B cell (primary cell): ENCODE measurements at regions of chr4 and their contacts with region 1.

Region 1: DNA sequence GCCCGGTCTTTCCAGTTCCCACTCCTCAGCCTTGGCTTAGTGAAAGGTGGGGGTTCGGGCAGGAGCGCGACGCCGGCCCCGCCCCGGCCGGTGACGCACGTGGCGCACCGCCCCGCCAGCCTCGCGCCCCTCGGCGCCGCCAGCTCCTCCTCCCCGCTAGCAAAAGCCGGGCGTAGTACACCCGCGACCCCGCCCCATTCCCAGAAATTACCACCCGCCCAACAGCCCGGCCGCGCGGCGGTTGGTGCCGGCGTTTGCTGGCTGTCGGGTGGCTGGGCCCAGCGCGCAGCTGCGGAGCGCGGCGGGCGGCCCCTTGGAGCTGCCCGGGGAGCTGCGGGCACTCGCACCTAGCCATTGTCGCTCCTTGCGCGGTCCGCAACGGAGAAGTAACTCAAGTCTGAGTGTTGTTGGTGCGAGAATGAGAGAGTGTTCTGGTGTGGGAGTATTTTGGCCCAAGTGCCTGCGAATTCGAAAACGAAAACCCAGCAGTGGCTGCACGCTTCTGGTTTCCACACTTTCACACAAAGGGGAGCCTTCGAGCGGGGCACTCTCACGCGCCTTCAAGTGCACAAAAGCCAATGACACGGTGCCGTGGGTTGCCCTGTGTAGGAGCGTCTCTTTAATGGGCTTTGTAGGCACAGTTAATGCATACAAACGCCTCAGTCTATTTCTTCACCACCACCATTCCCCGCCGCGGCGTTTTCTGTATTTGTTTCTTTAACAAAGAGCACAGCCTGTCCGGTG is 1.0 kb upstream of the ELF2 start:
- DNase-seq: peak; percentile 94
- ATAC-seq: peak; percentile 75
- H3K4me3 ChIP-seq: peak overlapping the region; percentile 47 to 89 (median 79)
- H3K4me3 Mint-ChIP-seq: peak overlapping the region; percentile 95
- H3K27ac ChIP-seq: peak overlapping the region; percentile 87 to 95
- H3K27ac Mint-ChIP-seq: peak overlapping the region; percentile 94
- H3K4me1 ChIP-seq: peaks cover 12 to 15% of the 10 kb centered on the region in 2 donors
- H3K4me1 Mint-ChIP-seq: peaks cover 23% of the 10 kb centered on the region
- H3K27me3 ChIP-seq: no peaks in the 10 kb centered on the region
- H3K27me3 Mint-ChIP-seq: no peaks in the 10 kb centered on the region
- CTCF ChIP-seq: no peak

Region 2: GRCh38 chr4:139083956-139084803 is 93.9 kb before region 1 on chr4:
- CTCF ChIA-PET with region 1: interaction called, 5 read pairs
- POLR2A ChIA-PET with region 1: interaction called, 31 read pairs
- intact Hi-C with region 1: loop called (anchors 1 kb)
- DNase-seq: peak; percentile 92
- ATAC-seq: peak; percentile 62
- H3K4me3 ChIP-seq: peak overlapping the region; percentile 79 to 98 (median 97)
- H3K4me3 Mint-ChIP-seq: peak overlapping the region; percentile 87
- H3K27ac ChIP-seq: peak overlapping the region; percentile 89 to 93
- H3K27ac Mint-ChIP-seq: peak overlapping the region; percentile 94
- H3K4me1 ChIP-seq: peaks cover 14 to 23% of the 10 kb centered on the region in 2 donors
- H3K4me1 Mint-ChIP-seq: peaks cover 36% of the 10 kb centered on the region
- H3K27me3 ChIP-seq: no peaks in the 10 kb centered on the region
- H3K27me3 Mint-ChIP-seq: no peaks in the 10 kb centered on the region
- CTCF ChIP-seq: peak; percentile 42

Region 3: GRCh38 chr4:139142087-139142486 is 36.0 kb before region 1 on chr4:
- CTCF ChIA-PET with region 1: no interaction called
- POLR2A ChIA-PET with region 1: no interaction called
- intact Hi-C with region 1: no loop called
- DNase-seq: peak; percentile 52
- ATAC-seq: peak; percentile 76
- H3K4me3 ChIP-seq: no peak overlapping the region
- H3K4me3 Mint-ChIP-seq: peak overlapping the region; percentile 11
- H3K27ac ChIP-seq: peak overlapping the region in 1 of 2 donors; percentile 60
- H3K27ac Mint-ChIP-seq: no peak overlapping the region
- H3K4me1 ChIP-seq: peaks cover 22 to 28% of the 10 kb centered on the region in 2 donors
- H3K4me1 Mint-ChIP-seq: peaks cover 39% of the 10 kb centered on the region
- H3K27me3 ChIP-seq: no peaks in the 10 kb centered on the region
- H3K27me3 Mint-ChIP-seq: no peaks in the 10 kb centered on the region
- CTCF ChIP-seq: no peak

Region 4: GRCh38 chr4:139214039-139214534 is 36.0 kb after region 1 on chr4:
- CTCF ChIA-PET with region 1: interaction called, 5 read pairs
- POLR2A ChIA-PET with region 1: interaction called, 6 read pairs
- intact Hi-C with region 1: loop called (anchors 5 kb)
- DNase-seq: peak; percentile 80
- ATAC-seq: peak; percentile 99
- H3K4me3 ChIP-seq: no peak overlapping the region
- H3K4me3 Mint-ChIP-seq: peak overlapping the region; percentile 24
- H3K27ac ChIP-seq: peak overlapping the region; percentile 50 to 69
- H3K27ac Mint-ChIP-seq: peak overlapping the region; percentile 68
- H3K4me1 ChIP-seq: peaks cover 15 to 16% of the 10 kb centered on the region in 2 donors
- H3K4me1 Mint-ChIP-seq: peaks cover 19% of the 10 kb centered on the region
- H3K27me3 ChIP-seq: no peaks in the 10 kb centered on the region
- H3K27me3 Mint-ChIP-seq: no peaks in the 10 kb centered on the region
- CTCF ChIP-seq: no peak

Region 5: DNA sequence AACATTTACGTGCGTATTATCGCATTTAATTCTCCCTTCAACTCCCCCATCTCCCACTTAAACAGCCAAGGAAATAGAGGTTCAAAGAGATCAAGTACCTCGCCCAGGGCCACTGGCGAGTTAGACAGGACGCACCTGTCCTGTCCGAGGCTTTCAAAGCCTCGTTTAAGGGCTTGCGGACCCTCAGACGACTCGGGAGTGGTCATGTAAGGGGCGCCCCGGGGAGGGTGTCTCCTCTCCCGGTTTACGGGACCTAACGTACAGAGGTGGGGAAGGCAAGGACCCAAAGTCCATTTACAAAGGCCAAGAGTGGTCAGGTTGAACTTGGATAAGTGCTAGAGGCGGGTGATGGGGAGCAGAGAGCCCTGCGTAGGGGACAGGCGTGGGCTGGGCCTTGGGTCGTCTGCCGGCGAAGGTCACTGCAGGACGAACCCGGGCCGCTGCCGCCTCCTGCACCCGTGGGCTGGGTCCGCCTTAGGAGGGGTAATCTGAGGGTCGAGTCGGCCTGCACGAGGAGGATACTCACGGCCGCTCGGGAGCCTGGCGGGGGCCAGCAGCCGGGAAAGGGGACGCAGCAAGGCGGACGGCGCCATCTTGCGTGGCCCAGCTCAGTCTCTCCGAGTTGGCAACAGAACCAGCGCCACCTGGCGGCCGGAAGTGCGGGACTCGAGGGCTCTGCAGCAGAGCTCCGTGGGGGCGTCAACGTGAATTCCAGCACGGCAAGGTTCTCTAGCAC is 117.3 kb after region 1 on chr4:
- CTCF ChIA-PET with region 1: interaction called, 20 read pairs
- POLR2A ChIA-PET with region 1: interaction called, 28 read pairs
- intact Hi-C with region 1: no loop called
- DNase-seq: peak; percentile 96
- ATAC-seq: peak; percentile 98
- H3K4me3 ChIP-seq: peak overlapping the region; percentile 78 to 96 (median 91)
- H3K4me3 Mint-ChIP-seq: peak overlapping the region; percentile 97
- H3K27ac ChIP-seq: peak overlapping the region; percentile 89 to 92
- H3K27ac Mint-ChIP-seq: peak overlapping the region; percentile 96
- H3K4me1 ChIP-seq: peaks cover 16 to 23% of the 10 kb centered on the region in 2 donors
- H3K4me1 Mint-ChIP-seq: peaks cover 26% of the 10 kb centered on the region
- H3K27me3 ChIP-seq: no peaks in the 10 kb centered on the region
- H3K27me3 Mint-ChIP-seq: no peaks in the 10 kb centered on the region
- CTCF ChIP-seq: peak; percentile 93

Region 6: DNA sequence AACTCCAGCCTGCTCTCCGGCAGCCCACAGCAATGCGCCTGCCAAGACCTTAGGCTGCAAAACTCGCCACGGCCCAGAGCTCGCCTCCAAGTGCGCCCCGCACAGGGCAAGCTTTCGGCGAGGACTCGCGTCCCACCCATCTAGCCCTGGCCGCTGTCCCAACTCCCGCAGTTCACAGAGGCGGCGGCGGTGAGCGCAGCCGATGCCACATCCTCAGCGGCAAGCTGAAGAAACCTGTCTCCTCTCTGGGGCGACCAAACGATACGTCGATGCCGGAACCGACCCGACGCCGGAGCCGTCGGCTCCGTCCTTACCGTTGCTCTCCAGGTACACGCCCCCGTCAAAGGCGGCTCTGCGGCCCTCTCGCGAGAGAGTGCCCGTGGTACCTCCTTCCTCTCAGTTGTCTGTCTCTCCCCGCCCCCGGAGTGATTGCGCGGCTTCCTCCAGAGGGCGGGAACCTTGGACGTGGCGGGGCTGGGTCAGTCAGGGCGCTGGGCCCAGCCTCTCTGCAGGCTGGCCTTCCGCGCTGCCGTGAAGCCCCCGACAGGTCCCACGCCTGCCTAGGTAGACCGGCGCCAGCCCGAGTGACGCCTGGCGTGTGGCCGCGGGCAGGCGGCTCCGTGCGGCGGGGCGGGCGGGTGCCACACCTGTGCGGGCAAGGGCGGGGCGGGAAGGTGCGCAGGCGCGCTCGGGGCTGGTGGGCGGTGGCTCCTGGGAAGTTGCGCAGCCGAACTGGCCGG is 275.5 kb after region 1 on chr4:
- CTCF ChIA-PET with region 1: no interaction called
- POLR2A ChIA-PET with region 1: interaction called, 4 read pairs
- intact Hi-C with region 1: loop called (anchors 1 kb)
- DNase-seq: peak; percentile 98
- ATAC-seq: peak; percentile 87
- H3K4me3 ChIP-seq: peak overlapping the region; percentile 64 to 99 (median 93)
- H3K4me3 Mint-ChIP-seq: peak overlapping the region; percentile 96
- H3K27ac ChIP-seq: peak overlapping the region; percentile 97 to 98
- H3K27ac Mint-ChIP-seq: peak overlapping the region; percentile 99
- H3K4me1 ChIP-seq: peaks cover 28 to 34% of the 10 kb centered on the region in 2 donors
- H3K4me1 Mint-ChIP-seq: peaks cover 51% of the 10 kb centered on the region
- H3K27me3 ChIP-seq: no peaks in the 10 kb centered on the region
- H3K27me3 Mint-ChIP-seq: no peaks in the 10 kb centered on the region
- CTCF ChIP-seq: peak; percentile 42

Region 7: GRCh38 chr4:140756319-140757231 is 1578.5 kb after region 1 on chr4 and contains the start of gene TBC1D9:
- CTCF ChIA-PET with region 1: no interaction called
- POLR2A ChIA-PET with region 1: no interaction called
- intact Hi-C with region 1: loop called (anchors 5 kb)
- DNase-seq: peak; percentile 88
- ATAC-seq: peak; percentile 62
- H3K4me3 ChIP-seq: peak within 1 kb of the TSS; percentile 66 to 99 (median 87)
- H3K4me3 Mint-ChIP-seq: peak within 1 kb of the TSS; percentile 97
- H3K27ac ChIP-seq: peak within 1 kb of the TSS; percentile 99
- H3K27ac Mint-ChIP-seq: peak within 1 kb of the TSS; percentile 98
- H3K4me1 ChIP-seq: peaks cover 45 to 56% of the 10 kb centered on the region in 2 donors
- H3K4me1 Mint-ChIP-seq: peaks cover 63% of the 10 kb centered on the region
- H3K27me3 ChIP-seq: no peaks in the 10 kb centered on the region
- H3K27me3 Mint-ChIP-seq: no peaks in the 10 kb centered on the region
- CTCF ChIP-seq: peak; percentile 1
- total RNA-seq, gene TBC1D9: 235 and 252 TPM in 2 replicates